MCF 10A (cell line): ENCODE measurements at regions of chr2 and their contacts with region 1.

Region 1: DNA sequence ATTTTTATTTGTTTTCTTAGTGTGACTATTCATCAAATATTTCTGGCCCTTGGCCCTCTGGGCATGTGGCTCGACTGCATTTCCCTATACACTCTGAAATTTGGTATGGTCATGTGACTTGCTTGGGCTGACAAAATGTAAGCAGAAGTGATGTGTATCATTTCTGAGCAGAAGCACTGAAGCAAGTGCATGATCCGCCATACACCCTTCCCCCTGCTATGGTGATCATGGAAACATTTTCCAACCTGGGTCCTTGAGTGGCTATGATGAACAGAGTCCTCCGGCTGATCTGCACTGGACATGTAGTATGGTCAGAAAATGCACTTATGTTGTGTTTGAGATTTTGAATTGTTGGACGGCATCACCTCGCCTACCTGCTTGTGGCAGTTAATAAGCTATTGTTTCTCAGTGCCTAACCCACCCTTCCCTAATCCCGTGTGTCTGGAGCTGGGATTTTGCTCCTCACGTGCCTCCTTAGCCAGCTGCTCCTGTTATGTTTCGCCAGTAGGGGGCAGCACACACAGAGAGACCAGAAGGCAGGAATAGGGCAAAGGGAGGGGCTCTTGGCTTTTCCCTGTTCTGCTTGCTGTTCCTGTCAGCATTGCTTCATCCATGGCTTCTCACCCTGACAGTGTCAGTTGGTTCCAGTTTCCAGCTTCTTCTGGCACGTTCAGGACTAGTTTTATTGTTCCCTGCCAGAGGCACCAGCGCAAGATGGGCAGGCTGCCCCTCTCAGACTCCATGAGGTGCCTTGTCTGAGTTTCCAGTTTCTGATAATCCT is 207.3 kb downstream of the ARL6IP6 start:
- DNase-seq: peak; percentile 94
- H3K4me3 Mint-ChIP-seq: peak overlapping the region; percentile 23
- H3K27ac Mint-ChIP-seq: peak overlapping the region; percentile 23
- H3K4me1 Mint-ChIP-seq: peaks cover 30% of the 10 kb centered on the region
- H3K27me3 Mint-ChIP-seq: no peaks in the 10 kb centered on the region
- CTCF ChIP-seq: peak; percentile 92

Region 2: DNA sequence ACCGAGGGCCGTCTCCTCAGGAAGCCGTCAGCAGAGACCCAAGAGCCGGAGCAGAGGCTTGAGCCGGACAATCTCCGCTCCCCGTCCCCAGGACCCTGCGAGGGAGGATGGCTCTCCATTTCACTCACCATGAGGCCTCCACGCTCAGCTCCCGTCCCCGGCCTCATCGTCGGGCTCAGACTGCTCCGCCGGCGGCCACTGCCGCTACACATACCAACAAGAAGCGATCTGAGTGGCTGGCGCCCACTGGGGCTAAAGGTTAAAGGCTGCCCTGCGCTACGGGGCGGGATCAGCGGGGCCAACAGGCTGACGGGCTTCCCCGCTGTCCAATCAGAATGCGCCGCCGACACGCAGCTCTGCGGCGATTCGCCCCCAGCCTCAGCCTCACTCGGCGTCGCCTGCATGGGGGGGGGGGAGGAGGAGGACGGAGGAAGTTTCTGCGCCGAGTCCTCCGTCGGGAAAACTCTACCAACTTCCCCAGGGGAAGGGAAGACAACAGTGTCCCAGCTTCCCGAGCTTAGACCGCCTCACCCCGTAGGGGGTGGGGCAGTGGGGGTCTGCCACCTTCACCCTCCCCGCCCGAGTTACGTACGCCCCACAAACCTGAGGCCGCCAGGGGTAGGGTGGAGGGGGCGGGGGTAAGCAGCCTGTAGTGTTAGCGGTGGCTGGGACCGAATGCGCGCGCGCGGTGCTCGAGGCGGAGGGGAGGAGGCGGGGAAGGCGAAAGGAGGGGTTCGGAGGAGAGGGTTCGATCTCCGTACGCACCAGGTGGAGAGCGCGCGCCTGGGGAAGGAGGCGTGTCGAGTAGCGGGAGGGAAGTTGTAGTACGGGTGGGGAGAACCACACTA is 208.3 kb before region 1 on chr2 and contains the start of gene PRPF40A:
- CTCF ChIA-PET with region 1: no interaction called
- POLR2A ChIA-PET with region 1: no interaction called
- intact Hi-C with region 1: loop called (anchors 5 kb)
- DNase-seq: peak; percentile 98
- H3K4me3 Mint-ChIP-seq: peak within 1 kb of the TSS; percentile 99
- H3K27ac Mint-ChIP-seq: peak within 1 kb of the TSS; percentile 99
- H3K4me1 Mint-ChIP-seq: peaks cover 10% of the 10 kb centered on the region
- H3K27me3 Mint-ChIP-seq: no peaks in the 10 kb centered on the region
- CTCF ChIP-seq: no peak
- total RNA-seq, gene PRPF40A: 140 and 147 TPM in 2 replicates

Region 3: DNA sequence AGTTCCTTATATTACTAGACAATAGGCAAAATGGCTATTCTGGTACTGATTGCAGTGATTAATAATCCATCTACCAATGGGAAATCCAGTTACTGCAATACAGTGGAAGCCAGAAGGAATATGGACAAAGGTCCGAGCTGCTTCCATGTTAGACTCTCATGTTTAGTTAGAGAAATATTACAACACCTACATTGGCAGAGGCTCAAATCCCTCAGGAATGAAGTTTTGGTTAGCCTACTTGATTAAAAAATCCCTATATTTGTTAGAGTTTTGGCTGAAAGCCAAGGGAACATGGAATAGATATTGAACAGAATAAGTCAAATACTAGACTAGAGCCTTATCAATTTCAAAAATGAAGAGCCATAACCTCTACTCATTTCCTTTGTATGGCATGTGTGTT is 158.8 kb before region 1 on chr2:
- CTCF ChIA-PET with region 1: no interaction called
- POLR2A ChIA-PET with region 1: no interaction called
- intact Hi-C with region 1: loop called (anchors 5 kb)
- DNase-seq: peak; percentile 38
- H3K4me3 Mint-ChIP-seq: no peak overlapping the region
- H3K27ac Mint-ChIP-seq: no peak overlapping the region
- H3K4me1 Mint-ChIP-seq: peaks cover 9% of the 10 kb centered on the region
- H3K27me3 Mint-ChIP-seq: no peaks in the 10 kb centered on the region
- CTCF ChIP-seq: no peak

Region 4: DNA sequence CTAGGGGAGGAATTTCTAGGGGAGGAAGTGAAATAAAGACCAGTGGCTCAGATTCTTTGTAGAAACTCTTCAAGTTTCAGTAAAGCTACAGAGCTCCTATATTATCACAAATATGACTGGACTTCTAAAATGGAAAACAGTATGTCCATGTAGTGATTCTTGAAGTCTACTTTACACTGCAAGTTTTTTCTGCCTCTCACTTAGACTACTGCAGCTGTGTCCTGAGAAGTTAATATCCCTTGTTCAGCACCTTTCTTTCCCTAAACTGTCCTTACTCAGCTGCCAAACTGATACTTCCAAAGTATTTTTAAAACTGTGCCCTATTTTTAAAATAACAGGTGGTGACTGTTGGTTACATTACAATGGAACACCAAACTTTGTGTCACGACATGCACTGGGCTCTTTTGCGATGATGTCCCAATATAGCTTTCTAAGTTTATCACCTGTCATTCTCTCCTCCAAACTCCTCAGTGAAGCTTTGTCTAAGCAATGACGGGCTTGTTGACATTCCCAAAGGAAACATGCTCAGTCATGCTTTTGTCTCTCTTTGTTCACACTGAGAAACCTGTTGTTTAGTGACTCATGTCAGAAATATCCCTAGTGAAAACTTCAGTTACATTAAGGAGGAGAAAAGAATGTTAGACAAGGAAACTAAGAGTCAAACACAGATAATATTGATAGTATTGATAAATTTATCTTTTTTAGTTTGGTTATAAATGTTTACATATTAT is 133.8 kb after region 1 on chr2:
- CTCF ChIA-PET with region 1: interaction called, 3 read pairs
- POLR2A ChIA-PET with region 1: no interaction called
- intact Hi-C with region 1: loop called (anchors 5 kb)
- DNase-seq: peak; percentile 92
- H3K4me3 Mint-ChIP-seq: peak overlapping the region; percentile 14
- H3K27ac Mint-ChIP-seq: peak overlapping the region; percentile 70
- H3K4me1 Mint-ChIP-seq: peaks cover 15% of the 10 kb centered on the region
- H3K27me3 Mint-ChIP-seq: no peaks in the 10 kb centered on the region
- CTCF ChIP-seq: no peak

Region 5: DNA sequence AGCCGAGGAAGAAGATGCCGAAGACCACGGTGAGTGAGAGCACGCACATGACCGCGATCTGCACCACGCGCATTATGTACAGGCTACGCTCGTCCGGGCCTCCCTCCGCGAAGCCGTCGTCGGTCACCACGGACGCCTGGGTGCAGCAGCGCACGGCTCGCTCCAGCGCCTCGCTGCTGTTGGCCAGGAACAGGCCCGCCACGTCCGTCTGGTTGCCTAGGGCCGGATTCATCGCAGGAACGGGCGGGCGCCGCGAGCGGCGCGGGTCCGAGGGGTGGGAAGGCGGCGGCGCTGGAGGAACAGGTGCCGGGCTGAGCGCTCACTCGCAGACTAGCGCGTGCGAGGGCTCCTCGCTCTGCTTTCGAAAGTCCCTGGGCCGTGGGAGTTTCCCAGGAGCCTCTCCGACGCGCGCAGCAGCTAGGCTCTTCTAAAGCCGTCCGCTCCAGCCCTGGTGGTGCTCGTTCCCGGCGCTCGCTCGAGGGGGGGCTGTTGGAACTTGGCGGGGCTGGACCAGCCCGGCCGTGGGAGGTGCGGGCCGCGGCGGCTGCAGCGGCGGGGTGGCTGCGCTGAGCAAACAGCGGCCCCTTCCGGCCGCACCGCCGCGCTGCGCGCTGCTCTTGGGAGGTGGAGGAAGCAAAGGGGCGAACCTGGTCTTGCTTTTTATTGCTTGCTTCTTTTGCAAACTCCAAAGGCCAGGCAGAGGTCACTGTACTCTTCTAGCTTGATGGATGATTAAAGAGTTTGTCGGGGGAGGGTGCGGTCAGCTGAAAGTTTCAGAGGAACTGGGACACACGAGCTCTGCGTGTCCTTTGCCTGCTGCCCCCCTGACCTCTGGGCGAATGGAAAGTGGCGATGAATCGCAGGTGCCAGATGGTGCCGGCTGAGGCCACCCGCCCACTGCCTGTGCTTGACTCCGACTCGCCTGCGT is 552.9 kb after region 1 on chr2 and contains the start of gene RPRM:
- CTCF ChIA-PET with region 1: interaction called, 15 read pairs
- POLR2A ChIA-PET with region 1: no interaction called
- intact Hi-C with region 1: loop called (anchors 2 kb)
- DNase-seq: peak; percentile 52
- H3K4me3 Mint-ChIP-seq: peak within 1 kb of the TSS; percentile 55
- H3K27ac Mint-ChIP-seq: no peak within 1 kb of the TSS
- H3K4me1 Mint-ChIP-seq: peaks cover 7% of the 10 kb centered on the region
- H3K27me3 Mint-ChIP-seq: peaks cover 48% of the 10 kb centered on the region
- CTCF ChIP-seq: peak; percentile 97
- total RNA-seq, gene RPRM: not detected in 2 replicates

Region 6: DNA sequence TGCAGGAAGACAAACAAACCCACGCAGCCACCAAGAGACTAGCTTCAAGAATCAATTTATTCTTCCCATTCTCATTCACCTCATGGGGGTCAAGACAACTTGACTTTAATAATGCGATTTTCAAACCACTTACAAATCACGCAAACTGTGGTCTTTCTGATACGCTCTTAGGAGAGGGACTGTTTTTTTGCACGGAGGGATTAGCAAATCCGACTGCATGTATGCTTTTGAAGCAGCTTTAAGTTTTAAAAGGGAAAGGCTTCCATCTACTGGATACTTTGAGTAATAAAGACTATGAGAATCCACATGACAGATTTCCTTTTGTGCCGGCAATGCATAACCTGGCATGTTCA is 1449.8 kb after region 1 on chr2:
- CTCF ChIA-PET with region 1: no interaction called
- POLR2A ChIA-PET with region 1: no interaction called
- intact Hi-C with region 1: loop called (anchors 10 kb)
- DNase-seq: peak; percentile 60
- H3K4me3 Mint-ChIP-seq: peak overlapping the region; percentile 52
- H3K27ac Mint-ChIP-seq: no peak overlapping the region
- H3K4me1 Mint-ChIP-seq: peaks cover 8% of the 10 kb centered on the region
- H3K27me3 Mint-ChIP-seq: peaks cover 63% of the 10 kb centered on the region
- CTCF ChIP-seq: peak; percentile 65